Stomach (tissue), 19 donors: ENCODE measurements at regions of chr13 and their contacts with region 1.

Region 1: DNA sequence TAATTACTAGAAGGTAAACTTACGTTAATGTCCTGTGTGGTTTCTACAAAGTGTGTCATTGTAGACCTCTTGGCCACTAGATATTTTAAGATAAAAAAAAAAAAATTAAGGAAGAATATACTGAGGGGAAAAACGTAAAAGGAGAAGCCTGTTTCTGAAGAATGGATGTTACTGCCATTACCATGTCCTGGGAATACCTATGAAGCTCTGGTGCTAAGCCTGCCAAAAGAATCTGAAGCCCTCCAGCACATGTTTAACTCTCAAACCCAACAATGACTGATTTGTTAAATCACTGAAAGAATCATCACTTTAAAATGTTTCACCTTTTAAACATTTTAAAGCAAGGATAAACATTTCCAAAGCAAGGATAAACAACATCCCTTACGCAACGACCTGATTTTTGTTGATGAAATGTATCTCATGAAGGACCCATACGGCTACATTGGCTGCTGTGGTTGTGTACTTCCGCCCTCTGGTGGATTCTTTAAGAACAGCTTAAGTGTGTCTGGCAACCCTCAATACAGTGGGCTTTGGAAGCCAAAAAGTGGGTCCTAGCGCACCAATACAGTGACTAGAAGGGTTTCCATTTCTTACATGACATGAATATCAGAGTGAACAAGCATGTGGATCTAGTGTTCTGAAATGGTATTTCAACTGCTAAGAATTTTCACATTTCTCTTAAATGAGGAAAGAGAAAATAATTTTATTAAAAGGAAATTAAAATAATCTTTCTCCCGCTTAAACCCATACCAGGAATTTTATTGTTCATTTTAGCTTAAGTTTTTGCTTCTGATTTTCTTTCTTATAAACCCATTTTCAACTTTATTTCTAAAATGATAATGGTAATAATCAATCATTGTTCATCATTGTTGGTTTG is 74.5 kb upstream of the RAP2A start:
- DNase-seq: peak; percentile 36 to 90
- H3K4me3 ChIP-seq: no peak overlapping the region
- H3K27ac ChIP-seq: peak overlapping the region in 2 of 5 donors; percentile 11 to 47
- H3K4me1 ChIP-seq: peaks cover 0 to 8% (median 3%) of the 10 kb centered on the region in 4 donors
- H3K27me3 ChIP-seq: no peaks in the 10 kb centered on the region
- CTCF ChIP-seq: peak in 5 of 7 experiments; percentile 65 to 84 (median 69)
- EP300 ChIP-seq: no peak
- POLR2A ChIP-seq: no peak

Region 2: GRCh38 chr13:97109841-97110492 is 249.5 kb before region 1 on chr13:
- intact Hi-C with region 1: loop called (anchors 5 kb)
- DNase-seq: peak; percentile 93 to 96
- H3K4me3 ChIP-seq: peak overlapping the region in 2 of 4 donors; percentile 6 to 12
- H3K27ac ChIP-seq: peak overlapping the region in 3 of 5 donors; percentile 16 to 73 (median 60)
- H3K4me1 ChIP-seq: peaks cover 20 to 66% (median 48%) of the 10 kb centered on the region in 4 donors
- H3K27me3 ChIP-seq: no peaks in the 10 kb centered on the region
- CTCF ChIP-seq: peak in 6 of 7 experiments; percentile 53 to 96 (median 94)
- EP300 ChIP-seq: no peak
- POLR2A ChIP-seq: no peak

Region 3: DNA sequence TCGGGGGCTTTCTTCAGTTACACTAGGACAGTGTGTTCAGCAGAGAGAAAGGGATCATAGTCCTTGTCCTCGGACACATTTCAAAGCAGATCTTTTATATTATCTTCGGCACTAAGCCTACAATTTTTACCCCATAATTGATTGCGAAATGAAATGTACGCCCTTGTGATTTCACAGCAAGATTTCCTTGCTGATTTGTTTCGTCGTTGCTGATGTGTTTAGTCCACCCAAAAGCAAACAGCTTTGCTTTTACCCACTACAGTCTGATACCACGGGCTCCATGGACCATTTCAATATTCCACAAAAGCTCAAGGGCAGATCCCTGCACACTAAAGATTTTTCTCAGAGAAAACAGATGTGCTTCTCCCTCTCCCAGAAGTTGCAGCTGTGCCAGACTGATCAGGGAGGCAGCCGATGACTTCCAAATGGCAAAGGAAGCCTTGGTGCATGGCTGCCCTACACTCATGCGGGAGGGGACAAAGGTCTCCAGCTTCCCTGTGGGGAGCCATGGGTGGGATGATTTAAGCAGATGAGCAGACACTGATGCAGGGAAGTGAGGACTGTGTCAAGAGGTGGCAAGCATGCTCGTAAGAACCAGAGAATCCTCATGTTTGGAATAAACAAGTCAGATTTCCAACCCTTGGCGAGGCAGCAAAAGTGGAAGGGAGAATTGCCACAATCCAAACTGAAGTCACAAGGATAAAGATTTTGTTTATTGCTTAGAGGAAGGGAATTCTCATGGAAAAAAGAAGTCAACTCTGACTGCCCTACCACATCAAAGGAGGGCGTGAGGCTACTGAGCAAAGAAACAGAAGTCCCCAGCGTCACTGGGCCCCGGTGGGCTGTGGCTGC is 1136.4 kb after region 1 on chr13:
- intact Hi-C with region 1: no loop called
- DNase-seq: no peak
- H3K4me3 ChIP-seq: no peak overlapping the region
- H3K27ac ChIP-seq: peak overlapping the region; percentile 32 to 81 (median 71)
- H3K4me1 ChIP-seq: peaks cover 21 to 70% (median 45%) of the 10 kb centered on the region in 4 donors
- H3K27me3 ChIP-seq: no peaks in the 10 kb centered on the region
- CTCF ChIP-seq: no peak
- EP300 ChIP-seq: no peak
- POLR2A ChIP-seq: no peak